ENCODE measurements at regions of chr2 and their contacts with region 1.

Region 1: GRCh38 chr2:223306371-223306770 is 254.4 kb downstream of the KCNE4 start:
- DNase-seq: peak; percentile 74
- H3K4me3 ChIP-seq: no peak overlapping the region
- H3K27ac ChIP-seq: no peak overlapping the region
- H3K4me1 ChIP-seq: no peaks in the 10 kb centered on the region
- H3K27me3 ChIP-seq: no peaks in the 10 kb centered on the region
- CTCF ChIP-seq: peak; percentile 74

Region 2: DNA sequence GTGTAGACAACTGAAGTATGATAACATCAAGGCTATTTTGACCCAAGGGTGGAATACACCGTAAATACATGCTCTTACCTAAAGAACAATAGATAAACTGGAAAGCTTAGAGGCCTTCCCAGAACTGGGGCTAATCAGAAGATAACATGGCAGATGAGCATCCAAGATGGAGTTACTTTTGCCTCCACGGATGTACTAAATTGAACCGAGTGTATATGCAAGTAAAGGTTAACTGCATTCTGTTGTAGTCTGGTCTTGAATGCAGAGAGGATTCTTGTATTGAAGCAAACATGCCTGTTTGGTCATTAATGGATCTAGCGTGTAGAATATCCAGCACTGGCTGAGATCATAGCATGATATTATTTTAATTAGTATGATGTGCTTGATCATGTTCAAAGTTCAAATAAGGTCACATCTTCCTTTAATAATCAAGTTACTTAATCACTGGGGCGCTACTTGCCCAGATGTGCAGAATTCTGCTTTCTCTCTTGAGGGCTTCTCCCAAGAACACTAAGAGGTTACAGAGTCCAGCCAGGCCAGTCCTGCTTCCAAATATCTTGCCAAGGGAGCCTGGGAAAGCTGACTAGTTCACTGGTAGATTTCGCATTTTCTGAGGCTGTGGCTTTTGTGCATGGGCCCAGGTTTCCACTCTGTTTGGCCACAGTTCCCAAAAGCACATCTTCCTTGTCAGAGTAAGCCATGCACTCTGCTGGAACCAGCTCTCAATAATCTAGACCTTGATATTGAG is 483.0 kb before region 1 on chr2:
- CTCF ChIA-PET with region 1: no interaction called
- POLR2A ChIA-PET with region 1: interaction called, 13 read pairs
- intact Hi-C with region 1: no loop called
- DNase-seq: no peak
- H3K4me3 ChIP-seq: no peak overlapping the region
- H3K27ac ChIP-seq: no peak overlapping the region
- H3K4me1 ChIP-seq: no peaks in the 10 kb centered on the region
- H3K27me3 ChIP-seq: no peaks in the 10 kb centered on the region
- CTCF ChIP-seq: no peak

Region 3: GRCh38 chr2:223601932-223602666 is 295.7 kb after region 1 on chr2 and contains the start of gene SCG2:
- CTCF ChIA-PET with region 1: no interaction called
- POLR2A ChIA-PET with region 1: no interaction called
- intact Hi-C with region 1: loop called (anchors 10 kb)
- DNase-seq: peak; percentile 90
- H3K4me3 ChIP-seq: peak within 1 kb of the TSS; percentile 30
- H3K27ac ChIP-seq: peak within 1 kb of the TSS; percentile 52
- H3K4me1 ChIP-seq: peaks cover 14% of the 10 kb centered on the region
- H3K27me3 ChIP-seq: no peaks in the 10 kb centered on the region
- CTCF ChIP-seq: peak; percentile 48; the same call in 1 of the 2 replicates
- total RNA-seq, gene SCG2: 26.2 and 27.0 TPM in 2 replicates